Colonic mucosa (tissue), 4 donors: ENCODE measurements at regions of chr16 and their contacts with region 1.

Region 1: DNA sequence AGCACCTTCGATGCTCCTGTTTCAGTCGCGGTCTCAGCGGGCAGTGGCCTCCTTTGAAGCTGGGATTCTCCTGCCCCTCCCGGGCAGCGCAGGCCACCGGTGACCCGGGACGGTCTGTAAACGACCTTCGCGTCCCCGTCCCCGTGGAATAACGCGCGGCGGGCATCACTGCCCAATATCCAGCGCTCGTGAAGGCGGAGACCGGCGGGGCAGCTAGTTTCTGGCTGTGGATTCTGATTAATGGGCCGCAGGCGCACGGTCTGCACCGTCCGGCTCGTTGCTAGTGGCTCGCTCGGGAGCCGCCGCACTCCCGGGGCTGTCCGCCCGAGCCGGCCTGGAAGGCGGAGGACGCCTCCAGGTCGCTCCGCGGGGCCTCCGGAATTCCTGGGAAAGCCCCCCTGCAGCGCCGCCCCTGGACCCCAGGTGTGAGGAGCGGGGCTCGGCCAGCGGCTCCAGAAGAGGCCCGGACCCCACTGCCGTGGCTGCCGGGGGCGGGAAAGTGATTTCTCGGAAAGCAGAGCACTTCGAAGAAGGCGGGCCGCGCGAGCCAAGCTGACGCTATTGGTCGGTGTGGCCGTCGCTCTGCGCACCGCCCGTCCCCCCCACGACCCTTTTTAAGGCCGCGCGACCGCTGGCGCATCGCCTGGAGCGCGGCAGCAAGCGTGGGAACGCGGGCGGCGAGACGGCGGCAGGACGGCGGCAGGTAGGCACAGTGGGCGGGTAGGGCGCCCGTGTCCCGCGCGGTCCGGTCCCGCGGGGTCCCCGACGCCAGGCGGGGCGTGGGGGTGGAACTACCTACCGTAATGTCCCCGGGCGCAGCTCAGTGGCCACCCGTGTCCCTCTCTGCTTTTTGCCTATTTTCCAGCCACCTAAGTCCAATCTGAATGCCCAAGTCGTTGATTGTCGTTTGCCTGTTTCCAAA is at the start of gene IRF8:
- DNase-seq: peak; percentile 88
- H3K4me3 ChIP-seq: peak within 1 kb of the TSS; percentile 79
- H3K27ac ChIP-seq: peak within 1 kb of the TSS; percentile 80
- H3K4me1 ChIP-seq: peaks cover 13% of the 10 kb centered on the region
- H3K27me3 ChIP-seq: no peaks in the 10 kb centered on the region
- CTCF ChIP-seq: no peak
- total RNA-seq, gene IRF8: 25.1 to 52.5 TPM

Region 2: GRCh38 chr16:85916141-85916890 is 17.5 kb after region 1 on chr16:
- intact Hi-C with region 1: no loop called
- DNase-seq: peak; percentile 95
- H3K4me3 ChIP-seq: no peak overlapping the region
- H3K27ac ChIP-seq: peak overlapping the region; percentile 68
- H3K4me1 ChIP-seq: no peaks in the 10 kb centered on the region
- H3K27me3 ChIP-seq: no peaks in the 10 kb centered on the region
- CTCF ChIP-seq: no peak

Region 3: GRCh38 chr16:85986931-85987749 is 88.4 kb after region 1 on chr16:
- intact Hi-C with region 1: loop called (anchors 10 kb)
- DNase-seq: peak; percentile 49
- H3K4me3 ChIP-seq: no peak overlapping the region
- H3K27ac ChIP-seq: peak overlapping the region; percentile 76
- H3K4me1 ChIP-seq: peaks cover 17% of the 10 kb centered on the region
- H3K27me3 ChIP-seq: no peaks in the 10 kb centered on the region
- CTCF ChIP-seq: peak; percentile 41